IMR-90 (cell line): ENCODE measurements at regions of chr1 and their contacts with region 1.

Region 1: DNA sequence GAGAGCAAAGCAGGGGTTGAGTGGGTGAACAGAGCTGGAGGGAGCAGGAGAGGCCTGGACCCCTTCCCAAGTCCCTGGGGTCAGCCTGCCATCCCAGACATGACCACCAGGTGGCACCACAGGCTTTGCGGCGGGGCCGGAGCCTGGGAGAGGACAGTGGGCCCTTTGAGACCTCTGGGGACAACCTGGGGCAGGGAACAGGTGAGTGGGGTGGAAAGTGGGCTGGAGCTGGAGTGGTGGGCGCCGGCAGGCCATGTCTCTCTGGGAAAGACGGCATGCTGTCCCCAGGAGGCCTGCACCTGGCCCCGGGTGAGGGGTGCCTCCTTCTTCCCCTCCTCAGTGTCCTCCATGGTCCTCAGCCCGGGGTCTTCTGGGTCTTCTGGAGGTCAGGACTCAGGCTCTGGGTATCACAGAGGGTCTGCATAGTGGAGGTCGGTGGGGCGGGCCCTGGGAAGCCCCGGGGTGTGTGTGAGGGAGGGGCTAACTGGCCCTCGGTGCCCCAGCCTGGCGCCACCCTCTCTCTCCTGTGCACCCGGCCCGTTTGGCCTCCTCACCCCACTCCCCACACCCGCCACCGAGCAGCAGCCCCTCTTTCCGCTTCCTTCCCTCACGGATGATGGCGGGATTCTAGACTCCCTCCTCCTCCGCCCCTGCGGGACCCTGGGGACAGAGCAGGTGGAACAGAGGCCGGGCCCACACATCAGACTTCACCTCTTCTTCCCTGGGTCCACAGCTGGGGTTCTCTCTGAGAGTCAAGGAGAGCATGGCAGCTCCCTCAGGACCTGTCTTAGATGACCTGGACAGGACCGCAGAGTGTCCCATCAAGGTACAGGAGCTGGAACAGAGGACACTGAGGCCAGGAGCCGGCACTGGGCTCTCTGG is 28.4 kb upstream of the PKP1 start:
- DNase-seq: no peak
- ATAC-seq: peak; percentile 89
- H3K4me3 ChIP-seq: no peak overlapping the region
- H3K27ac ChIP-seq: no peak overlapping the region
- H3K4me1 ChIP-seq: peaks cover 4% of the 10 kb centered on the region
- H3K27me3 ChIP-seq: peaks cover 27% of the 10 kb centered on the region
- CTCF ChIP-seq: peak; percentile 94
- POLR2A ChIP-seq: peak; percentile 66
- RAD21 ChIP-seq: peak; percentile 99

Region 2: GRCh38 chr1:200602632-200603031 is 652.2 kb before region 1 on chr1:
- CTCF ChIA-PET with region 1: no interaction called
- POLR2A ChIA-PET with region 1: no interaction called
- dilution Hi-C with region 1: no loop called
- in situ Hi-C with region 1: no loop called
- intact Hi-C with region 1: no loop called
- DNase-seq: no peak
- ATAC-seq: no peak
- H3K4me3 ChIP-seq: no peak overlapping the region
- H3K27ac ChIP-seq: no peak overlapping the region
- H3K4me1 ChIP-seq: no peaks in the 10 kb centered on the region
- H3K27me3 ChIP-seq: no peaks in the 10 kb centered on the region
- CTCF ChIP-seq: no peak
- POLR2A ChIP-seq: no peak
- RAD21 ChIP-seq: no peak

Region 3: GRCh38 chr1:201348211-201348566 is 93.3 kb after region 1 on chr1:
- CTCF ChIA-PET with region 1: interaction called, 5 read pairs
- POLR2A ChIA-PET with region 1: no interaction called
- dilution Hi-C with region 1: no loop called
- in situ Hi-C with region 1: loop called (anchors 5 kb)
- intact Hi-C with region 1: loop called (anchors 1 kb)
- DNase-seq: peak; percentile 63
- ATAC-seq: peak; percentile 91
- H3K4me3 ChIP-seq: no peak overlapping the region
- H3K27ac ChIP-seq: no peak overlapping the region
- H3K4me1 ChIP-seq: no peaks in the 10 kb centered on the region
- H3K27me3 ChIP-seq: peaks cover 53% of the 10 kb centered on the region
- CTCF ChIP-seq: peak; percentile 82
- POLR2A ChIP-seq: no peak
- RAD21 ChIP-seq: peak; percentile 82

Region 4: DNA sequence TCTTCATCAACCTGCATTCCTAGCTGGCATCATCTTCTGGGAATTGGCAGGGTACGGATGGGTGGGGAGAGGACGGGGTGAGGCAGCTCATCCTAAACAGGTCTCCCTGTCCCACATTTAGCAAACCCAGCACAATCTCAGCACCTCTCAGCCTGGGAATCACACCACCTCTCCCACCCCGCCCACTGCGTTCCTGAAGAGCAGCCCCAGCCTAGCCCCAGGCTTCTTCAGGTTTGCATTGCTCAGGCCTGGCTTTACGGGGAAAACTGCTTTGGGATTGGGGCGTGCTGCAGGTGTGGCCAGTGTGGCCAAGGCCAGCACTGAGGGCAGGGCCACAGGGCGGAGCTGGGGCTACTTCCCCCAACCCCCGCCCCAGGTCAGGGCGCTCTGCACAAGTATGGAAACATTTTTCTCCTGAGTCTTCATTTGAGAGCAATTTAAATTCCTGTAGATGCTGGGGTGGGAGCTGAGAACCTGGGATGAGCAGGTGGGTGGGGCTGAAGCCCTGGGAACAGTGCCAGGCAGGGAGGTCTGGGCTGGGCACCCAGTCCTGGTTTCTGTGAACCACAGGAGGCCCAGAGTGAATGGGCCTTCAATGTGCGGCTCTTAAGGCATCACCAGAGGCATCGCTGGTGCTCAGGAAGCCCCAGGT is 98.4 kb after region 1 on chr1:
- CTCF ChIA-PET with region 1: no interaction called
- POLR2A ChIA-PET with region 1: no interaction called
- dilution Hi-C with region 1: no loop called
- in situ Hi-C with region 1: loop called (anchors 5 kb)
- intact Hi-C with region 1: no loop called
- DNase-seq: no peak
- ATAC-seq: no peak
- H3K4me3 ChIP-seq: no peak overlapping the region
- H3K27ac ChIP-seq: no peak overlapping the region
- H3K4me1 ChIP-seq: no peaks in the 10 kb centered on the region
- H3K27me3 ChIP-seq: peaks cover 60% of the 10 kb centered on the region
- CTCF ChIP-seq: no peak
- POLR2A ChIP-seq: no peak
- RAD21 ChIP-seq: no peak

Region 5: GRCh38 chr1:201361652-201362504 is 107.0 kb after region 1 on chr1:
- CTCF ChIA-PET with region 1: interaction called, 6 read pairs
- POLR2A ChIA-PET with region 1: no interaction called
- dilution Hi-C with region 1: no loop called
- in situ Hi-C with region 1: no loop called
- intact Hi-C with region 1: loop called (anchors 1 kb)
- DNase-seq: peak; percentile 28
- ATAC-seq: peak; percentile 93
- H3K4me3 ChIP-seq: no peak overlapping the region
- H3K27ac ChIP-seq: no peak overlapping the region
- H3K4me1 ChIP-seq: no peaks in the 10 kb centered on the region
- H3K27me3 ChIP-seq: peaks cover 64% of the 10 kb centered on the region
- CTCF ChIP-seq: peak; percentile 76
- POLR2A ChIP-seq: no peak
- RAD21 ChIP-seq: peak; percentile 90